Dorsolateral prefrontal cortex (tissue), 120 donors: ENCODE measurements at regions of chr3 and their contacts with region 1.

Region 1: DNA sequence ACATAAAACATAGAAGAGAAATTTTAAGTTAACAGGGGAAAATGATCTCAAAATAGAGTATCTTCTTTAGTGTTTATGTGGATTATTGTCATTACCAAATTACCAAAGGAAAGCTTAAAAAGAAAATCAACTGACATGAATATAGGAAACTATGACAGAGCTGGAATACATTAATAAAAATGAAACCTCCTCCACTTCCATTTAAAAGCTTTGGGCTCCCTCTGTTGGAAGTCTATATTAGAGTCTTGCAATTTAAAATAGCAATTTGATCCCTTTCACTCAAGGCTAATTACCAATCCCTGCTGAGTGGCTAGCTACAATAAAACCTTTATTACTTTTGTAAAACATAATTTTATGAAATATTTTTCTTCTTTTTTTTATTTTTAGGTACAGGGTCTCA is 61.4 kb upstream of the IMPG2 start:
- DNase-seq: no peak
- H3K4me3 ChIP-seq: no peak overlapping the region
- H3K27ac ChIP-seq: no peak overlapping the region
- H3K27me3 ChIP-seq: no peaks in the 10 kb centered on the region
- CTCF ChIP-seq: peak in 53 of 56 donors; percentile 26 to 73 (median 52)

Region 2: DNA sequence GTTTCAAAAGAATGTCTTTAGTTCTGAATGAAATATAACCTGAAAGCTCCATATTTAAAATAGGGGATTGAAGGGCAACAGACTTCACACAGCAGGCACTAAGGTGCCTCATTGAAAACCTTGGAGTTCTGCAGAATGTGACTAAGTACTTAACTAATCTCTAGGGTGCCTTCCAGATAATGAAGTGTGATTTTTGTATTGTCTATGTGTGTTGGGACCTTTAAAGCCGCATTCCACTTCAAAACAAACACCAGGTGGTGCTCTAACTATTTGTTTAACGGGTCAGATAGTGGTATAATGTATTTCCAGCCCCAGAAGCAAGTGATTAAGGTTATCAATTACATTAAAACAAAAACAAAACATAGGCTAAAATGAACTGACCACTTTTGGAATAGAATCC is 644.5 kb before region 1 on chr3:
- intact Hi-C with region 1: loop called in 1 of 2 experiments (anchors 10 kb)
- DNase-seq: no peak
- H3K4me3 ChIP-seq: no peak overlapping the region
- H3K27ac ChIP-seq: no peak overlapping the region
- H3K27me3 ChIP-seq: no peaks in the 10 kb centered on the region
- CTCF ChIP-seq: peak in 47 of 56 donors; percentile 7 to 62 (median 40)

Region 3: DNA sequence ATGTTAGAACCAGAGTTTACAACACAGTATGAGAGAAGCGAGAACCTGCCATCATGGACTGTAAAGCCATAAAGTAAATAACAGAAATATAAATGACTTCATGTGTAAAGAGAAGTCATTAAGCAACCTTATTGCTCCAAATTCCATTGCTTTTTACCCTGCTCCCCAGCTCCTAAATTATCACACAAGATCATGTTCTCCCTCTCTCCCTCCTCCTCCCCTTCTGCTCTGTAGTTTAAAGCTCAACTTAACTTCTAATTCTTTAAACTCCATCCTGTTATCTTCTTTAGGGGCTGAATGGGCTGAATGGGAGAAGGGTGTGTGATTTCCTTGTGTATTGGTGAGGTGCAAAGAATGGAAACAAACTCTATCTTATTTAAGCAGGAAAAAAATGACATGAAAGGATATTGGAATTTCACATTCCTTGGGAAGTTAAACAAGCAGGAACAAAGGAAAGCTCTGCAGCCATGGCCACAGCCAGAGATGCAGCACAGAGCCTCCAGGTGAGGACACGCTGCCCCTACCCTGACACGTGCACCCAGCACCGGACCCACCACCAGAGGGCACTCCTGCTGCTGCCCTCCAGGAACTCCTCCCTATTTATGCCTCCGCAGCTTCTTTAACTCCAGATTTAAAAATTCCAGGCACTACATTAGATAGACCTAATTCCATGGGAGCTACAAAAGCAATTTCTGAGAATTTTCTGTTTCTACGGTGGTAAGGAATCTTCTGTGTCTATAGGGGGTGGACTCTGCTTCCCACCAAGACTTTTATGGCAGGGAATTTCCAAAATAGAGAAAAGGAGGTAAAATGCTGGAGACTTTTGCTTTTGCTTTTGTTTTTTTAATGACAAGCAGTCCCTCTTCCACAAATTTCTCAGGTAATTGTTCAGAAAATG is 311.7 kb before region 1 on chr3:
- intact Hi-C with region 1: loop called in 1 of 2 experiments (anchors 5 kb)
- DNase-seq: peak in 1 of 10 donors; percentile 7
- H3K4me3 ChIP-seq: no peak overlapping the region
- H3K27ac ChIP-seq: no peak overlapping the region
- H3K27me3 ChIP-seq: peaks cover 0 to 8% (median 0%) of the 10 kb centered on the region in 45 donors
- CTCF ChIP-seq: peak in 53 of 56 donors; percentile 13 to 68 (median 49)

Region 4: GRCh38 chr3:101243285-101244211 is 138.3 kb before region 1 on chr3:
- intact Hi-C with region 1: no loop called
- DNase-seq: no peak
- H3K4me3 ChIP-seq: no peak overlapping the region
- H3K27ac ChIP-seq: no peak overlapping the region
- H3K27me3 ChIP-seq: peaks cover 0 to 4% (median 0%) of the 10 kb centered on the region in 45 donors
- CTCF ChIP-seq: no peak